ENCODE measurements at regions of chr9 and their contacts with region 1.

Region 1: DNA sequence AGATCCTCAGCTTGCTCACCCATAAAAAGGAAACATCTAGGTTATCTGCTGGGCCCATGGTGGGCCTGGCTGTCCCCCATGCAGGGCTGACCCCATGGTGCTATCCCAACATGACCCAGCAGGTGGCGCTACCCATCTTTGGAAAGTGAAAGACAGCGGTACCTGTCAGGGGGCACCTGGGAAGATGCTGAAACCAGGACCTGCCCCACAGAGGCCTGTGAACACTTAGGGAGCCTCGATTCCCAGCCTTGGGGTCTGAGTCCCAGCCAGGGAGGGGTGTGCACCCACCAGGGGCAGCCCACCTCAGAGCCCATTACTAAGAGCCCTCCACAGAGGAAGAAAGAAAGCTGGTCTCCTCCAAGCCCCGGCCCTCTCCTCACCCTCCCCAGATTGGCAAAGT is 46.6 kb upstream of the IPPK start:
- DNase-seq: peak; percentile 80
- H3K4me3 Mint-ChIP-seq: no peak overlapping the region
- H3K27ac Mint-ChIP-seq: no peak overlapping the region
- H3K4me1 Mint-ChIP-seq: no peaks in the 10 kb centered on the region
- H3K27me3 Mint-ChIP-seq: no peaks in the 10 kb centered on the region
- CTCF ChIP-seq: peak; percentile 70

Region 2: GRCh38 chr9:91824601-91825305 is 891.8 kb before region 1 on chr9:
- CTCF ChIA-PET with region 1: no interaction called
- intact Hi-C with region 1: no loop called
- DNase-seq: no peak
- H3K4me3 Mint-ChIP-seq: no peak overlapping the region
- H3K27ac Mint-ChIP-seq: no peak overlapping the region
- H3K4me1 Mint-ChIP-seq: no peaks in the 10 kb centered on the region
- H3K27me3 Mint-ChIP-seq: peaks cover 48% of the 10 kb centered on the region
- CTCF ChIP-seq: no peak

Region 3: GRCh38 chr9:92790542-92791527 is 74.3 kb after region 1 on chr9:
- CTCF ChIA-PET with region 1: interaction called, 7 read pairs
- intact Hi-C with region 1: loop called (anchors 2 kb)
- DNase-seq: peak; percentile 75
- H3K4me3 Mint-ChIP-seq: no peak overlapping the region
- H3K27ac Mint-ChIP-seq: no peak overlapping the region
- H3K4me1 Mint-ChIP-seq: peaks cover 11% of the 10 kb centered on the region
- H3K27me3 Mint-ChIP-seq: peaks cover 21% of the 10 kb centered on the region
- CTCF ChIP-seq: peak; percentile 71

Measured in Calu3 (cell line).